ENCODE measurements at regions of chr20 and their contacts with region 1.

Region 1: DNA sequence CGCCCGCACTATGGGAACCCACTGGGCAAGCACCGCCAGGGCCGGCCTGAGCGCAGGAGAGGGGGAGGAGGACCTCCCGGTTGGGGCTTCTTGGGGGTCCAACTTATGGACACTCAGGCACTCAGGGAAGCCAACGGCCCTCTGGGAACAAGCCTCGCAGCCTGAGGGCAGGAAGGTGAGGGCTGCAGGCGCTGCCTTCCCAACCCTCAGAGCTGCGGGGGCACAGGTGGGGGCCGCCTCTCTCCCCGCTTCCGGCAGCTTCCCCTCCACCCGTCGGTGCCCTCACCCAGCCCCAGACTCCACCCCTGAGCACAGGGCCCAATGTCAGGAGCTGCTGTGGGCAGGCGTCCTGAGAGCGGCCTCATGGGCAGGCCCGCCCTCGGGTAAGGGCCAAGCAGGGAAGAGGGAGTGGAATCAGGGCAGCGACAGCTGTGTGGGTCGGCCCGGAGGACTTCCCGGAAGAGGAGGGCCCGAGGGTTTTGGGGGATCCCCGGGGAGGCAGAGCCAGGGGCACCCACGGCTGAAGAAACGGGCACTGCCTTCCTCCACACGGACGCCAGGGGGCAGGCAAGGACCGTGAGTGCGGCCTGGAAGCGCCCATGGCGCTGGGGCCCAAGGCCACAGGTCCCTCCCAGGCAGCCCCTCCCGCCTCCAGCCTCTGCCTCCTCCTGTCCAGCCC is 488 bp upstream of the PTK6 start:
- DNase-seq: peak; percentile 100
- H3K27ac ChIP-seq: peak overlapping the region; percentile 96
- CTCF ChIP-seq: peak; percentile 99

Region 2: GRCh38 chr20:63495741-63496595 is 41.7 kb before region 1 on chr20:
- CTCF ChIA-PET with region 1: interaction called, 18 read pairs
- POLR2A ChIA-PET with region 1: interaction called, 3 read pairs
- DNase-seq: peak; percentile 84
- H3K27ac ChIP-seq: peak overlapping the region; percentile 6; the same call in 1 of the 2 replicates
- CTCF ChIP-seq: peak; percentile 100

Region 3: GRCh38 chr20:63520504-63520933 is 17.1 kb before region 1 on chr20 and contains the start of gene PPDPF:
- CTCF ChIA-PET with region 1: interaction called, 13 read pairs
- POLR2A ChIA-PET with region 1: interaction called, 53 read pairs
- DNase-seq: peak; percentile 100
- H3K27ac ChIP-seq: peak within 1 kb of the TSS; percentile 92
- CTCF ChIP-seq: no peak

Region 4: DNA sequence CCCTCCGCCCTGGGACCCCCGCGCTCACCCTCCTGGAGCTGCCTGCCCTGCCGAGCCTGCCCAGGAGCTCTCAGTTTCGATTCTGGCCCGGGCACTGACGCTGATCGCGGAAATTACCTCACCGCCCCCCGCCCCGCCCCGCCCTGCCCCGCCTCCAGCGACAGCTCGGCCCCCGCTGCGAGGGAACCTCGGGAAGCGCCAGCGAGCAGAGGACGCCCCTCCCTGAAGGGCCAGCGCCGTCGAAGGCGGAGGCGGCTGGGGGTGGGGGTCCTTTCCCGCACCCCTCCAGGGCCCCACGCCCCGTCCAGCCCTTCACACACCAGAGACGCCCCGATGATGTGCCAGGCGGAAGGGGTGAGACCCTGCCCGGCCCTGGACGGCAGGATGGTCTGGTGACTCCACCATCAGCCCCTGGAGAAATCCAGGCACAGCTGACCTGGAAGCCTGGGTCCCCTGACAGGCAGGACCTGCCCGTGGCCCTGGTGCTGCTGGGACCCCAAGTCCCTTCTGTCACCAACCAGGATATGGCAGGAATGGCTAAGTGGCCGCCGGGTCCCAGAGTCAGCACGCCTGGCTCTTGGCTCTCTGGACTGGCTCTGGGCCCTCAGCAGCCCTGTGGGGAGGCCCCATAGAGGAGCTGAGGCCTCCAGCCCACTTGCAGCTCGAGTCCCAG is 36.6 kb after region 1 on chr20 and contains the start of gene HELZ2:
- CTCF ChIA-PET with region 1: interaction called, 15 read pairs
- POLR2A ChIA-PET with region 1: interaction called, 5 read pairs
- DNase-seq: peak; percentile 91
- H3K27ac ChIP-seq: peak within 1 kb of the TSS; percentile 80
- CTCF ChIP-seq: no peak

Region 5: DNA sequence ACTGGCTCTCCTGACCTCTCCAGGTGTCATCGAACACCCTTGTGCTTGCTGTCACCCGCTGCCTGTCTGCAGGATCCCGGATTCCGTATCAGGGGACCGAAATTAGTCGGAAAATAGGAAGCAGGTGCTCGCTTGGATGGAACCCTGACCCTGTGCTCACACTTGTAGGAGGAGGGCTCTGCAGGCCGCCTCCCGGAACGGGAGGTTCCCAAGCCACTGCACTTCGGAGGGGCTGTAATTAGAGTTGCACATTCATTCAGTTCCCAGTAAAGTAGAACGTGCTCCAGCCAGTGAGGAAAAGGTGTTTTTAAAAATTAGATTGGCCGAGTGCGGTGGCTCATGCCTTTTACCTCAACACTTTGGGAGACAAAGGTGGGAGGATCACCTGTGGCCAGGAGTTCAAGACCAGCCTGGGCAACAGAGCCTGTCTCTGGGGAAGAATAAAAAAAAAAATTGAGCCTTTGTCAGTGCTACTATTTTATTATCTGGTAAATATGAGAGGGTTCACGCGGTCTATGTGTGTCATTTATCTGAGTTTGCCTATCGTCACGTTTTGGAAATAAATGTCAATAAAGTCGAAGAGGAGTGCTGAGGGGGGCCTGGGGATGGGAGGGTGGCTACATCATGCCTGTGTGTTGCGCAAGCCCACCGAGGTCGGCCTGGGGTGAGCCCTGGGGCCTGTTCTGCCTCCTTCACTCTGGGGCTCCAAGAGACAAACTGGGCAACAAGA is 90.7 kb after region 1 on chr20:
- CTCF ChIA-PET with region 1: interaction called, 7 read pairs
- POLR2A ChIA-PET with region 1: interaction called, 11 read pairs
- DNase-seq: peak; percentile 90
- H3K27ac ChIP-seq: peak overlapping the region; percentile 97
- CTCF ChIP-seq: no peak

Region 6: GRCh38 chr20:63641792-63642544 is 104.3 kb after region 1 on chr20:
- CTCF ChIA-PET with region 1: interaction called, 13 read pairs
- POLR2A ChIA-PET with region 1: interaction called, 3 read pairs
- DNase-seq: peak; percentile 97
- H3K27ac ChIP-seq: no peak overlapping the region
- CTCF ChIP-seq: no peak; the same call in 1 of the 2 replicates

Region 7: GRCh38 chr20:63667858-63668257 is 130.2 kb after region 1 on chr20:
- CTCF ChIA-PET with region 1: no interaction called
- POLR2A ChIA-PET with region 1: no interaction called
- DNase-seq: no peak
- H3K27ac ChIP-seq: no peak overlapping the region
- CTCF ChIP-seq: no peak

Measured in RWPE1 (cell line).